Endothelial cell of umbilical vein (primary cell): ENCODE measurements at regions of chr2 and their contacts with region 1.

Region 1: GRCh38 chr2:233026192-233026813 is 6.2 kb upstream of the NEU2 start:
- DNase-seq: no peak
- H3K4me3 ChIP-seq: no peak overlapping the region
- H3K27ac ChIP-seq: no peak overlapping the region
- H3K4me1 ChIP-seq: no peaks in the 10 kb centered on the region
- H3K27me3 ChIP-seq: no peaks in the 10 kb centered on the region
- CTCF ChIP-seq: no peak
- POLR2A ChIP-seq: no peak

Region 2: GRCh38 chr2:232600053-232600773 is 426.1 kb before region 1 on chr2:
- CTCF ChIA-PET with region 1: no interaction called
- POLR2A ChIA-PET with region 1: no interaction called
- dilution Hi-C with region 1: no loop called
- intact Hi-C with region 1: loop called (anchors 10 kb)
- DNase-seq: no peak
- H3K4me3 ChIP-seq: no peak overlapping the region
- H3K27ac ChIP-seq: no peak overlapping the region
- H3K4me1 ChIP-seq: no peaks in the 10 kb centered on the region
- H3K27me3 ChIP-seq: peaks cover 0 to 2% of the 10 kb centered on the region in 2 experiments
- CTCF ChIP-seq: no peak
- POLR2A ChIP-seq: no peak

Region 3: DNA sequence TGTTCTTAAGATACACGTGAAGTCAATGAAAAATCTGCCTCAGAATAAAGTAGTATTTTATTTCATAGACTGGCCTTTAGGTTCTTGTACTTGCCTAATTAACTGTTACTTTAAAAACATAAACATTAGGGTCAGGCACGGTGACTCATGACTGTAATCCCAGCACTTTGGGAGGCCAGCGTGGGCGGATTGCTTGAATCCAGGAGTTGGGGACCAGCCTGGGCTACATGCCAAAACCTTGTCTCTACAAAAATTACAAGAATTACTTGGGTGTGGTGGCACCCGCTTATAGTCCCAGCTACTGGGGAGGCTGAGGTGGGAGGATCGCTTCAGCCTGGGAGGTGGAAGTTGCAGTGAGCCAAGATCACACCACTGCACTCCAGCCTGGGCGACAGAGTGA is 172.2 kb before region 1 on chr2:
- CTCF ChIA-PET with region 1: interaction called, 55 read pairs
- POLR2A ChIA-PET with region 1: no interaction called
- dilution Hi-C with region 1: no loop called
- intact Hi-C with region 1: loop called (anchors 1 kb)
- DNase-seq: peak; percentile 68
- H3K4me3 ChIP-seq: no peak overlapping the region
- H3K27ac ChIP-seq: no peak overlapping the region
- H3K4me1 ChIP-seq: peaks cover 8% of the 10 kb centered on the region
- H3K27me3 ChIP-seq: no peaks in the 10 kb centered on the region
- CTCF ChIP-seq: no peak
- POLR2A ChIP-seq: no peak

Region 4: GRCh38 chr2:232876078-232876977 is 150.0 kb before region 1 on chr2:
- CTCF ChIA-PET with region 1: interaction called, 31 read pairs
- POLR2A ChIA-PET with region 1: no interaction called
- dilution Hi-C with region 1: no loop called
- intact Hi-C with region 1: no loop called
- DNase-seq: no peak
- H3K4me3 ChIP-seq: peak overlapping the region in 2 of 3 experiments; percentile 29 to 45
- H3K27ac ChIP-seq: no peak overlapping the region
- H3K4me1 ChIP-seq: no peaks in the 10 kb centered on the region
- H3K27me3 ChIP-seq: no peaks in the 10 kb centered on the region
- CTCF ChIP-seq: peak; percentile 26 to 46
- POLR2A ChIP-seq: no peak

Region 5: GRCh38 chr2:233012301-233012971 is 13.9 kb before region 1 on chr2:
- CTCF ChIA-PET with region 1: interaction called, 13 read pairs
- POLR2A ChIA-PET with region 1: no interaction called
- dilution Hi-C with region 1: no loop called
- intact Hi-C with region 1: no loop called
- DNase-seq: no peak
- H3K4me3 ChIP-seq: no peak overlapping the region
- H3K27ac ChIP-seq: no peak overlapping the region
- H3K4me1 ChIP-seq: no peaks in the 10 kb centered on the region
- H3K27me3 ChIP-seq: peaks cover 0 to 3% of the 10 kb centered on the region in 2 experiments
- CTCF ChIP-seq: no peak
- POLR2A ChIP-seq: no peak

Region 6: GRCh38 chr2:233061591-233062450 is 35.5 kb after region 1 on chr2:
- CTCF ChIA-PET with region 1: interaction called, 10 read pairs
- POLR2A ChIA-PET with region 1: no interaction called
- dilution Hi-C with region 1: no loop called
- intact Hi-C with region 1: no loop called
- DNase-seq: peak; percentile 70
- H3K4me3 ChIP-seq: peak overlapping the region; percentile 21 to 65 (median 55)
- H3K27ac ChIP-seq: peak overlapping the region; percentile 29
- H3K4me1 ChIP-seq: peaks cover 32% of the 10 kb centered on the region
- H3K27me3 ChIP-seq: no peaks in the 10 kb centered on the region
- CTCF ChIP-seq: peak; percentile 33 to 56
- POLR2A ChIP-seq: peak; percentile 19